Calu3 (cell line): ENCODE measurements at regions of chr16 and their contacts with region 1.

Region 1: DNA sequence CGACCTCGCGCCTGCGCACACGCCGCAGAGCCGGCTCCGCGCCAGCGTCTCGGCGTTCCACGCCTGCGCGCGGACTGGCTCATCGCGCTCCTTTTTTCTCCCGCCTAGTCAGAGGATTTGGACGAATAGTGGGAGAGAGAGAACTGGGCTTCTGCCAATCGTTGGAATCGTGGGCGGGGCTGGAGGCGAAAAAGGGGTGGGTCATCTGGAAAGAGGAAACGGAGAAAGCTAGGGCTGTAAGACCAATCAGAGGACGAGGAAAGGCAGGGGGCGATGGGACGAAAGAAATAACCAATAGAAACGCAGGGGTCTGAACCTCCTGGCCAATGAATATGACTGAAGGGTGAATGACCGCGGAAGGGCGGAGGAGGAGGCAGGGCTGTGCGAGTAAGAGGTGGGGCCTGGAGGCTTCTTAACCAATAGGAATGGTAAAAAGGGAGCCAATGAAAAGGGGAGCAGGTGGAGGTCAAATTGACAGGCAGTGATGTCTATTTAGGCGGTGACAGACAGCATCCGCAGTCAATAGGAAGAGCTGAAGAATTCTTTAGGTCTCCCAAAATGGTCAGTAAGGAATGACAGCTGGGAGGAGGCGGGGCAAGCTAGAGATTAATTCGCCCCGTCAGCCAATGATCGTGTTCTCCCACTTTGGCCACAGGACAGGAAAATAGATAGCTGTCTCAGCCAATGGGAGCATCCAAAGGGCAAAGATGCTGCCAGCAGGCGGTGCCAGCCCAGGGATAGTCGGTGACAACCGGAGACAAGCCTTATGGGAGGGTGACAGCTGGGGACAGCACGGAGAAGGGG is at the start of gene TBC1D10B:
- DNase-seq: peak; percentile 99
- H3K4me3 Mint-ChIP-seq: peak within 1 kb of the TSS; percentile 86
- H3K27ac Mint-ChIP-seq: peak within 1 kb of the TSS; percentile 99
- H3K4me1 Mint-ChIP-seq: peaks cover 44% of the 10 kb centered on the region
- H3K27me3 Mint-ChIP-seq: peaks cover 14% of the 10 kb centered on the region
- CTCF ChIP-seq: no peak
- total RNA-seq, gene TBC1D10B: 66.4 and 69.5 TPM in 2 replicates

Region 2: DNA sequence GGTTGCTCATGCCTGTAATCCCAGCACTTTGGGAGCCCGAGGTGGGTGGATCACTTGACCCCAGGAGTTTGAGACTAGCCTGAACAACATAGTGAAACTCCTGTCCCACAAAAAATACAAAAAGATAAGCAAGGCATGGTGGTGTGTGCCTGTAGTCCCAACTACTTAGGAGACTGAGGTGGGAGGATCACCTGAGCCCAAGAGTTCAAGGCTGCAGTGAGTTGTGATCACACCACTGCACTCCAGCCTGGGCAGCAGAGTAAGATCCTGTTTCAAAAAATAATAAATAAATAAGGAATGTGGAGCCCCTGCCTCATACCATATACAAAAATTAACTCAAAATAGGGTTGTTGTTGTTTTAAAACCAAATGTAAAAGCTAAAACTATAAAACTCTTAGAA is 213.4 kb before region 1 on chr16:
- CTCF ChIA-PET with region 1: no interaction called
- intact Hi-C with region 1: no loop called
- DNase-seq: no peak
- H3K4me3 Mint-ChIP-seq: no peak overlapping the region
- H3K27ac Mint-ChIP-seq: no peak overlapping the region
- H3K4me1 Mint-ChIP-seq: no peaks in the 10 kb centered on the region
- H3K27me3 Mint-ChIP-seq: no peaks in the 10 kb centered on the region
- CTCF ChIP-seq: no peak

Region 3: DNA sequence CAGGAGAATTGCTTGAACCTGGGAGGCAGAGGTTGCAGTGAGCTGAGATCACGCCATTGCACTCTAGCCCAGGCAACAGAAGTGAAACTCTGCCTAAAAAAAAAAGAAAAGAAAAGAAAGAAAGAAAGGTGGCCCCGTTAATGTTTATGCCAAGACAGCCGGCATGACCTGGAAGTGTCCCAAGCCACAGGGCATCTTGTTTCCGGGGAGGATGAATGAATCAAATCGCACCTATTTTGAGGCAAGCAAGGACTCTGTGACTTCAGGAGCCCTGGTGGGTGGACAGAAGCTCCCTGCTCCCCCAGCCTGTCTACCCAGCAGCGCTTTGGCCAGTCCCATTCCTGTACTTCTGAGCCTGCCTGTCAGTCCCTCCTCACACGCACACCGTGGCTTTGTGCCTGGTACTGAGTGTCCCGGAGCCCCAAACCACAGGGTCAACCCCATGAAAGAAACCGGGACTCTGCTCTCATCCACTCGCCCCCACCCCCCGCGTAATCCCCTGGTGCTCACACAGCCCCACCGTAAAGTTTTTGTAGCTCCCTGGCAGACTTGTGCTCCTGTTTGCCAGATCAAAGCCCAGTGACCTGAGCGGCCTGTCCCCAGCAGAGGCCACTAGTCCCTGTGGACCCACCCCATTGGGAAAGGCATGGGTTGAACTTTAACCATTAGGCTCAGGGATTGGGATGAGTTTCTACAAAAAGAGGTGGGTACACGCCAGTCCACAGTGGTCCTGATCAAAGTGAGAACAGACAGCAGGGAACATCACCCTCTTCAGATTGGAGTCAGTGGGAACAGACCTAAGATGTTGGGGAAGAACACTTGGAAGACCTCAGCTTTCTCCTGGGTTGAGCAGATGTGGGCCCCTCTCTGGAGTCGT is 34.8 kb before region 1 on chr16:
- CTCF ChIA-PET with region 1: no interaction called
- intact Hi-C with region 1: no loop called
- DNase-seq: peak; percentile 42
- H3K4me3 Mint-ChIP-seq: peak overlapping the region; percentile 94
- H3K27ac Mint-ChIP-seq: peak overlapping the region; percentile 46
- H3K4me1 Mint-ChIP-seq: peaks cover 10% of the 10 kb centered on the region
- H3K27me3 Mint-ChIP-seq: no peaks in the 10 kb centered on the region
- CTCF ChIP-seq: no peak

Region 4: DNA sequence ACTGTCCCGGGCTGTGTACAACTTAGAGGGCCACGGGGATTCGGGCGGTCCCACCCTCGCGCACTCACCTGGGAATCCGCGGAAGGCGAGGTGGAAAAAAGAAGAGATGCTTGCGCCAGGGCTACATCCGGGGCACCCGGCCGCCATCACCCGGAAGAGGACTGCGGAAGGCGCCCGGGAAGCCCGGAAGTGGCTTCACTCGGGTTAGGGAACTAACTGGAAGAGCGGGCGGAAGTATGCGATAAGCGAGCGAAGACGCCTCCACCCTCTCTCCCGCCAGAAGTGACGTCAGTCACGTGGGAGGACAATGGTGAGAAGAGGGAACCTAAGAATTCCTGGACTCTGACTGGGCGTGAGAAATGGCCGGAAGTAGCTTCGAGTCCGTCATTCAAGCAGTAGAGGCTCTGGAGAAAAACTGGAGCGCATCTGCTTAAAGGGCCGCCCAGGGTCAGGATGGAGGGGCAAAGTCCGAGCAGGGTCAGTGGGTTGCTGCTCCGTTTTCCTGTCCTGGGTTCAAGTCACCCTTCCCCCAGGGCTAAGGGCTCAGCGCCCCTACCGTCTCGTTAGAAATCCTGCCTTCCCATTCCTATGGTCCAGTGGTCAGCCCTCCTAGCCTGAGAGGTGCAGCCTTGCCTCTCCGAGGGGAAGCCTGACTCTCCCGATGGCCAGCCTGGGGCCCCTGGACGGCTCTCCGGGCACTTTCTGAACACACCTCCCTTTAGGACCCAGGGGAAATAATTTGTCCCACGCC is 15.3 kb before region 1 on chr16 and contains the start of gene CD2BP2:
- CTCF ChIA-PET with region 1: interaction called, 4 read pairs
- intact Hi-C with region 1: loop called (anchors 2 kb)
- DNase-seq: peak; percentile 95
- H3K4me3 Mint-ChIP-seq: peak within 1 kb of the TSS; percentile 90
- H3K27ac Mint-ChIP-seq: peak within 1 kb of the TSS; percentile 99
- H3K4me1 Mint-ChIP-seq: peaks cover 48% of the 10 kb centered on the region
- H3K27me3 Mint-ChIP-seq: no peaks in the 10 kb centered on the region
- CTCF ChIP-seq: no peak
- total RNA-seq, gene CD2BP2: 65.8 and 82.6 TPM in 2 replicates

Region 5: DNA sequence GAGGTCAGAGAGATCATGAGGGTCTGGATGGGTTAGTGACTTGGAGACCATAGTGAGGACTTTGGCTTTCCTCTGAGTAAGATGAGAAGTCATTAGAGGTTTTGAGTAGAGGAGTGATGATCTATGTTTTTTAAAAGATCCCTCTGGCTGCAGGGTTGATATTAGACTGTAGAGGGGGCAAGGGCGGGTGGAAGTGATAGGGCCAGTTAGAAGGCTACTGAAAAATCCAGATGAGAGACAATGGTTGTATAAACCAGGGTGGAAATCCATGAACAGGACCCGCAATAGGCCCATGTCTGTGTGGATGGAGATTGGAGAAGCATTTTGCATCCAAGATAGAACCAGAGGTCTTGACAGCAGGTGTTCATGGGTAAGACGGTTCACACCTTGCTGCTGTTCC is 111.7 kb after region 1 on chr16:
- CTCF ChIA-PET with region 1: no interaction called
- intact Hi-C with region 1: no loop called
- DNase-seq: peak; percentile 13
- H3K4me3 Mint-ChIP-seq: no peak overlapping the region
- H3K27ac Mint-ChIP-seq: no peak overlapping the region
- H3K4me1 Mint-ChIP-seq: no peaks in the 10 kb centered on the region
- H3K27me3 Mint-ChIP-seq: peaks cover 45% of the 10 kb centered on the region
- CTCF ChIP-seq: no peak

Region 6: GRCh38 chr16:30557957-30558788 is 187.5 kb after region 1 on chr16 and contains the start of gene ZNF764:
- CTCF ChIA-PET with region 1: no interaction called
- intact Hi-C with region 1: no loop called
- DNase-seq: peak; percentile 98
- H3K4me3 Mint-ChIP-seq: peak within 1 kb of the TSS; percentile 90
- H3K27ac Mint-ChIP-seq: peak within 1 kb of the TSS; percentile 79
- H3K4me1 Mint-ChIP-seq: peaks cover 20% of the 10 kb centered on the region
- H3K27me3 Mint-ChIP-seq: no peaks in the 10 kb centered on the region
- CTCF ChIP-seq: no peak
- total RNA-seq, gene ZNF764: 16.5 and 16.7 TPM in 2 replicates